ENCODE measurements at regions of chr3 and their contacts with region 1.

Region 1: GRCh38 chr3:16048435-16049318 is 125.8 kb upstream of the GALNT15 start:
- DNase-seq: peak; percentile 73
- H3K4me3 ChIP-seq: no peak overlapping the region
- H3K27ac ChIP-seq: no peak overlapping the region
- H3K4me1 ChIP-seq: no peaks in the 10 kb centered on the region
- H3K27me3 ChIP-seq: no peaks in the 10 kb centered on the region
- CTCF ChIP-seq: peak; percentile 75 to 85 (median 77)
- POLR2A ChIP-seq: no peak

Region 2: GRCh38 chr3:16177962-16178627 is 129.4 kb after region 1 on chr3:
- intact Hi-C with region 1: loop called (anchors 5 kb)
- DNase-seq: peak; percentile 89
- H3K4me3 ChIP-seq: no peak overlapping the region
- H3K27ac ChIP-seq: no peak overlapping the region
- H3K4me1 ChIP-seq: peaks cover 9% of the 10 kb centered on the region
- H3K27me3 ChIP-seq: no peaks in the 10 kb centered on the region
- CTCF ChIP-seq: peak; percentile 84 to 95 (median 93)
- POLR2A ChIP-seq: no peak

Measured in testis (tissue), 5 donors.